ENCODE measurements at regions of chr19 and their contacts with region 1.

Region 1: DNA sequence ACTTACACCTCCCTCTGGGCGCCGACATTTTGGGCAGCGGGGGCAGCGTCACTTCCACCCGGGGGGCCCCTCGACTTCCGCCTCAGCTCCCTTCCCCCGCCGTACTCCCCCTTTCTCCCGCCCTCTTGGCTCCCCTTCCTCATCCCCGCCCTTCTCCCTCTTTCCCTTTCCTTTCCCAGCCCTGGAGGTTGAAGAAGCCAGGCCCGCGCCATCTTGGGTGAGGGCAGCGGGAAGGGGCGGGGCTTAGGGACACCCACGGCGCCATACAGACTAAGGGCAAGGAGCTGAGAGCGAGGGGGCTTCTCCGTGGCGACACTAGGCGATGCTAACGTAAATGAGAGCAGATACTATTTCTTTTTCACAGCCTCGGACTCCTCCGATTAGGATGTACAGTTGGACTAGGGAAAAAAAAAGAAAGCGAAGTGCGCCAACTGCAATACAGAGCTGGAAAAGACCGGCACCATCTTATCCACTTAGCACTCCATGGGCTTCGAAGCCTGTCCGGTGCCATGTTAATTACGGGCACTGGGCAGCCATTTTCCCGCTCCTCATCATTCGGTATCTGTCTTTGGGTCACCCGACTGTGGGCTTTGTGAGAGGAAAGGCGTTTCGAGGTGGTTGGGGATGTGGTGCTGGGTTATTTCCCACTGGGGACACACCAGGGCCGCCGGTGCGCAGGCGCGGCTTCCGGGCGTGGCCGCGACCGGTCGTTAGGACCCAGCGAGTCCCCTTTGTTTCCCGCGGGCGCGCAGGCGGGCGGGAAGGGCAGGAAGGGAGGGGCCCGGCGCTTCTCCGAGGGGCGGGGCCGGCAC is at the start of gene FIZ1:
- DNase-seq: peak; percentile 97 to 100 (median 98)
- ATAC-seq: peak; percentile 92
- H3K4me3 ChIP-seq: peak within 1 kb of the TSS; percentile 57 to 73
- H3K27ac ChIP-seq: peak within 1 kb of the TSS; percentile 98 to 99
- H3K4me1 ChIP-seq: peaks cover 0 to 38% of the 10 kb centered on the region in 2 donors
- H3K27me3 ChIP-seq: no peaks in the 10 kb centered on the region
- CTCF ChIP-seq: no peak
- polyA plus RNA-seq, gene FIZ1: 16.7 to 22.6 (median 19.6) TPM

Region 2: GRCh38 chr19:55516878-55517620 is 82.6 kb before region 1 on chr19:
- intact Hi-C with region 1: loop called in 1 of 2 experiments (anchors 10 kb)
- DNase-seq: peak; percentile 84 to 97 (median 94)
- ATAC-seq: peak; percentile 100
- H3K4me3 ChIP-seq: peak overlapping the region; percentile 31 to 46
- H3K27ac ChIP-seq: peak overlapping the region; percentile 74 to 76
- H3K4me1 ChIP-seq: no peaks in the 10 kb centered on the region
- H3K27me3 ChIP-seq: peaks cover 0 to 13% of the 10 kb centered on the region in 2 donors
- CTCF ChIP-seq: peak; percentile 40 to 67

Measured in left lung (tissue), 14 donors.